PC-9 (cell line): ENCODE measurements at regions of chr6 and their contacts with region 1.

Region 1: DNA sequence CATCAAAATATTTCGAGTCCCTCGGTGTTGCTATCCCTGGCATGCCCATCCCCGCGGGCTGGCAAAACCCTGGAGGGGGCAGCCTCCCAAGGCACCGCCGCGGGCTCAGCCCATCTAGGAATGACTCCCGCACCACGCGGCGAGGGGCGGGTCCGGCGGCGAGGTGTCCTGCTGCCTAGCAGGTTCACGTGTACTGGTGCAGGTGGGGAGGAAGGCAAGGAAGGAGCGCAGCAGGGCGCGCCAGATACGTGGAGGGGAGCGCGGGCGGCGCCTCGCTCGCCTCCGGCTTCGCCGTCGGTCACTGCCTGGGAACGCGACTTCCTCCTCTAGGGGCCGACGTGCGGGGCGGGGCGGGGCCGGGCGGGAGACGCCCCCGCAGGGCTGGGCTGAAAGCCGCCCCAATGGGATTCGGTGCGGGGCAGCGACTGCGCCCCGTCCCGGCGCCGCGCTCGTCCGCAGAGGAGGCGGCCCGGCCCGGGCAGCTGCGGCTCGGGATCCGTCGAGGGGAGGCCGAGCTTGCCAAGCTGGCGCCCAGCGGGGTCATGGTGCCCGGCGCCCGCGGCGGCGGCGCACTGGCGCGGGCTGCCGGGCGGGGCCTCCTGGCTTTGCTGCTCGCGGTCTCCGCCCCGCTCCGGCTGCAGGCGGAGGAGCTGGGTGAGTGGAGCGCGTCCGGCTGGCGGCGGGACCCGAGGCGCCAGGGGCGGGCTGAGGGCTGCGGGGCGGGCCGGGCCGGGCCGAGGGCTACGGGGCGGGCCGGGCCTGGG is at the start of gene DCBLD1:
- DNase-seq: peak; percentile 80 to 83
- H3K4me3 ChIP-seq: peak within 1 kb of the TSS; percentile 93
- H3K27ac ChIP-seq: peak within 1 kb of the TSS; percentile 45
- H3K4me1 ChIP-seq: peaks cover 16% of the 10 kb centered on the region
- H3K27me3 ChIP-seq: no peaks in the 10 kb centered on the region
- CTCF ChIP-seq: no peak; the same call in 1 of the 2 replicates
- total RNA-seq, gene DCBLD1: 5.7 and 6.1 TPM in 2 replicates

Region 2: DNA sequence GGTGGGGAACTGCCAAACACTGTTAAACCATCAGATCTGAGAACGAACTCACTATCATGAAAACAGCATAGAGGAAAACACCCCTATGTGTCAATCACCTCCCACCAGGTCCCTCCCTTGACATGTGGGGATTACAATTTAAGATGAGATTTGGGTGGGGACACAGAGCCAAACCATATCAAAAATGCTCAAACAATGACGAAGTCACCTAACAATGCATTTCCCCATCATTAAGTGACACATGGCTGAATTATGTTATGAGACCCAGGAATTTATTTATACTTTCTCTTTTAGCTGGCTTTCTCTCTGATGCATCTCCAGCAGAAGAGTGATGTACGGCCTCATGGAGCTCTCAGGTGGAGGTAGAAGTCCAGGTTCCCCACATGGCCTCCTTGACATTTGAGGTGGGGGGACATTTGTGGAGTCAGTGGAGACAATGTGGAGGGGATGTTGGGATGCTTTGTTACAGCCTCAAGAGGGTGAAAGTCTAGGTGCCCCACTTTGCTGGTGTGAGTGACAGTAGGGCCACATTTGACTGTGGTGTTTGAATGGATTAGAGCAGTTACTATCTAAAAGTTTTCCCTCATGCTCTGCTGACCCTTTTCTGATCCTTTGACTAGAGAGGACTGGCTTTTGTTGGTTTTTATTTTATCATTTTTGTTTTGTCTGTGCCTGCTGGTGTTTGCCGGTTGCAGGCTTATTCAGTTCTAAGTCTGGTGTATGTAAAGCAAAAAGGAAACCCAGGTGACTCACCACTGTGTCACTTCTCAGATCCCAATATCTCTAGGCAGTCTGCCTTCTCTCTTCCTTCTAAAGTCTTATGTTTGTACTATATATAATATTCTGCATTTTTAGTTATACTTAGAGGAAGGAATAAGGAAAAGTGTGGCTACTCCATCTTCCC is 18.4 kb before region 1 on chr6:
- CTCF ChIA-PET with region 1: no interaction called
- POLR2A ChIA-PET with region 1: no interaction called
- intact Hi-C with region 1: loop called (anchors 2 kb)
- DNase-seq: peak; percentile 12 to 66
- H3K4me3 ChIP-seq: no peak overlapping the region
- H3K27ac ChIP-seq: no peak overlapping the region
- H3K4me1 ChIP-seq: peaks cover 19% of the 10 kb centered on the region
- H3K27me3 ChIP-seq: no peaks in the 10 kb centered on the region
- CTCF ChIP-seq: no peak

Region 3: DNA sequence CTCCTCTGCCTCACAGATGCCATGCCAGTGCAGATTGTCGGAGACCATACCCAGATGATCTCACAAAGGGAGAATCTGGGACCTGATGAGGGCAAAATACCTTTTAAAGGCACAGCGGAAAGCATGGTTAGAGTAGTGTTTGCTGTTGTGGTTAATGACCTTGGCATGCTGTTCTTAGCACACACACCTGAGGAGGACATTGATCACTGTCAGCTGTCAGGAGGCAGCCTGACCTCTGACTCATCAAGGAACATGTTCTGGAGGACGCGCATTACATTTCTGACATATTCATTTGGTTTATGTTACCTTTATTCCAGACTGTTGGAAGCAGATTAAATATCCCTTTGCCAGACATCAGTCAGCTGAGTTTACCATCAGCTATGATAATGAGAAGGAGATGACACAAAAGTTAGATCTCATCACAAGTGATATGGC is 62.8 kb after region 1 on chr6:
- CTCF ChIA-PET with region 1: interaction called, 8 read pairs
- POLR2A ChIA-PET with region 1: interaction called, 5 read pairs
- intact Hi-C with region 1: loop called (anchors 1 kb)
- DNase-seq: peak; percentile 60 to 99
- H3K4me3 ChIP-seq: no peak overlapping the region
- H3K27ac ChIP-seq: peak overlapping the region; percentile 40
- H3K4me1 ChIP-seq: peaks cover 79% of the 10 kb centered on the region
- H3K27me3 ChIP-seq: no peaks in the 10 kb centered on the region
- CTCF ChIP-seq: no peak